Activated B cell treated with CpG ODN at 0.5 μM for 24 hours (primary cell): ENCODE measurements at regions of chr12 and their contacts with region 1.

Region 1: DNA sequence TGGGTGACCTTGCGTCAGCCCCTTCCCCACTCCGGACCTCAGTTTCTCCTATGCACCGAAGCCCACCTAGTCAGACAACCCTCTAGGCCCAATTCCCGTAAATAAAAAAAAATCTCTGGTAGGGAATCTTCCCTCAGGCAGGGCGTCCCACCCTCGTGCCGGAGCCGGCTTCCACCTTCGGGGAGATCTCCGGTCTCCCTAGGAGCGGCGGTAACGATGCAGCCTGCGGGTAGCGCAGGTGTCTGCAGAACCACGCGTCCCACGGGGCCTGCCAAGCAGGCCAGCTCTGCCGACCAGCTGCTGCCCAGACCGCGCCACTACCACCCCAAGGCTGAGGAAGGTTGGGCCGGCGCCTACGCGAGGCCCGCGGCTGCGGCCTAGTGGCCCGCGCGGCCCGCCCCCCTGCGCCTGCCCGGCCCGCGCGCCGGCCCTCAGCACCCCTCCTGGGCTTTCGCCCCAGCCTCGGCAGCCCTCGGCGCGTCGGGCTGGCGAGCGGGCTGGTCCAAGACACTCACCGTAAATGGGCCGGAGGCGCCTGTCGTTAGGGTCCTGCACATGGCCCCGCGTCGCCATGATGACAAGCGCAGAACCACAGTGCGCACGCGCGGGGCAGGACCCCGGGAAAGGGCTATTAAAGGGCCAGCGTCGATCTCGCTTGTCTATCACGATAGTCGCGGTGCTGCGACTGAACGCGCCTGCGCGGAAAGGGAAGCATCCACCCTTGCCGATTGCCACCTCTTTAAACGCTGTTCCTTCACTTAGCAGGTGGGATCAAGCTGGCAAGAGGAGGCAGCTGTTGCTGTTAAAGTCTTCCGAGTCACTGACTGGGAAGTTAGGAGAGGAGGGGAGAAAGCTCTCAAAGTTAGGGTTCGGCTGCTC is at the start of gene NAA25:
- DNase-seq: peak; percentile 85
- ATAC-seq: peak; percentile 68
- H3K4me3 Mint-ChIP-seq: peak within 1 kb of the TSS; percentile 96
- H3K27ac Mint-ChIP-seq: peak within 1 kb of the TSS; percentile 98
- H3K4me1 Mint-ChIP-seq: peaks cover 41% of the 10 kb centered on the region
- H3K27me3 Mint-ChIP-seq: no peaks in the 10 kb centered on the region
- CTCF ChIP-seq: no peak
- total RNA-seq, gene NAA25: 43.5 and 52.7 TPM in 2 replicates

Region 2: GRCh38 chr12:111942557-111942956 is 165.9 kb before region 1 on chr12:
- CTCF ChIA-PET with region 1: no interaction called
- POLR2A ChIA-PET with region 1: interaction called, 10 read pairs
- intact Hi-C with region 1: no loop called
- DNase-seq: no peak
- ATAC-seq: no peak
- H3K4me3 Mint-ChIP-seq: no peak overlapping the region
- H3K27ac Mint-ChIP-seq: no peak overlapping the region
- H3K4me1 Mint-ChIP-seq: peaks cover 2% of the 10 kb centered on the region
- H3K27me3 Mint-ChIP-seq: no peaks in the 10 kb centered on the region
- CTCF ChIP-seq: no peak

Region 3: GRCh38 chr12:112025808-112026375 is 82.5 kb before region 1 on chr12:
- CTCF ChIA-PET with region 1: no interaction called
- POLR2A ChIA-PET with region 1: interaction called, 14 read pairs
- intact Hi-C with region 1: no loop called
- DNase-seq: no peak
- ATAC-seq: peak; percentile 56
- H3K4me3 Mint-ChIP-seq: peak overlapping the region; percentile 40
- H3K27ac Mint-ChIP-seq: peak overlapping the region; percentile 77
- H3K4me1 Mint-ChIP-seq: peaks cover 25% of the 10 kb centered on the region
- H3K27me3 Mint-ChIP-seq: no peaks in the 10 kb centered on the region
- CTCF ChIP-seq: no peak

Region 4: GRCh38 chr12:112125250-112125999 is 17.0 kb after region 1 on chr12 and contains the start of gene TRAFD1:
- CTCF ChIA-PET with region 1: interaction called, 7 read pairs
- POLR2A ChIA-PET with region 1: interaction called, 143 read pairs
- intact Hi-C with region 1: loop called (anchors 1 kb)
- DNase-seq: peak; percentile 96
- ATAC-seq: peak; percentile 98
- H3K4me3 Mint-ChIP-seq: peak within 1 kb of the TSS; percentile 87
- H3K27ac Mint-ChIP-seq: peak within 1 kb of the TSS; percentile 78
- H3K4me1 Mint-ChIP-seq: peaks cover 45% of the 10 kb centered on the region
- H3K27me3 Mint-ChIP-seq: no peaks in the 10 kb centered on the region
- CTCF ChIP-seq: no peak
- total RNA-seq, gene TRAFD1: 47.8 and 51.0 TPM in 2 replicates

Region 5: DNA sequence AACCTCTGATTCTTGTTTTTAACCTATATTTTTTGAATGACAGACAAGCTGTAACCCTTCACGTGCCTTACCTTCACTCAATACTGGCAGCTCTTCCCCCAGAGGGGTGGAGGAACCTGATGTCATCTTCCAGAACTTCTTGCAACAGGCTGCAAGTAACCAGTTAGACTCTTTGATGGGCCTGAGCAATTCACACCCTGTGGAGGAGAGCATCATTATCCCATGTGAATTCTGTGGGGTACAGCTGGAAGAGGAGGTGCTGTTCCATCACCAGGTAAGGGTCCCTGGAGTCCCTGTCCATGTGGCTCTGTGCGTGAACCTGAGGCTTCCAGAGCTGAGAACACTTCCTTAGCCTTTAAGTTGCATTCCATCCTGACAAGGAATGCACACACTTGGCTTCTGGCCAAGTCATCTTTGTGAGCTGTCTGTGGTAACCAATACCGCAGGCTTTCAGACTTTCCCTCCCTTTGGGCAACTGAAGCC is 39.6 kb after region 1 on chr12:
- CTCF ChIA-PET with region 1: no interaction called
- POLR2A ChIA-PET with region 1: no interaction called
- intact Hi-C with region 1: loop called (anchors 5 kb)
- DNase-seq: no peak
- ATAC-seq: no peak
- H3K4me3 Mint-ChIP-seq: no peak overlapping the region
- H3K27ac Mint-ChIP-seq: no peak overlapping the region
- H3K4me1 Mint-ChIP-seq: peaks cover 31% of the 10 kb centered on the region
- H3K27me3 Mint-ChIP-seq: no peaks in the 10 kb centered on the region
- CTCF ChIP-seq: no peak

Region 6: DNA sequence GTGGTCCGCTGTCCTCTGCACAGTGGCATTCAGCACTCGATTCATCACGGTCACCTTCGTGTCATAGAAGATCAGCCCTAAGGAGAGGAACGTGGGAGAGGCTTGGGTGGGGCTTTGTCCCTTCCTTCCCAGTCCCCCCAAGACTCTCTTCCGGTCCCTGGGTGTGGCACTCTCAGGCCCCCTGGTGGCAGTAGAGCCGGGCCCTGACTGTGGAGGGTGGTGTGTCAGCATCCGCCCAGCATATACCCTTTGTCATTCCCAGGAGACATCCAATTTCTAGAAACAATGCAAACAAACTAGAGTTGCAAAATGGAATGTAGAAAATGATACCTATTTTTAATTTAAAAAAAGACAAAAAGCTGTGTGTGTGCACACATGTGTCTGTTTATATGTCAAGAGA is 61.9 kb after region 1 on chr12:
- CTCF ChIA-PET with region 1: interaction called, 5 read pairs
- POLR2A ChIA-PET with region 1: no interaction called
- intact Hi-C with region 1: loop called (anchors 1 kb)
- DNase-seq: no peak
- ATAC-seq: peak; percentile 66
- H3K4me3 Mint-ChIP-seq: no peak overlapping the region
- H3K27ac Mint-ChIP-seq: no peak overlapping the region
- H3K4me1 Mint-ChIP-seq: peaks cover 6% of the 10 kb centered on the region
- H3K27me3 Mint-ChIP-seq: no peaks in the 10 kb centered on the region
- CTCF ChIP-seq: no peak